ENCODE measurements at regions of chr9 and their contacts with region 1.

Region 1: DNA sequence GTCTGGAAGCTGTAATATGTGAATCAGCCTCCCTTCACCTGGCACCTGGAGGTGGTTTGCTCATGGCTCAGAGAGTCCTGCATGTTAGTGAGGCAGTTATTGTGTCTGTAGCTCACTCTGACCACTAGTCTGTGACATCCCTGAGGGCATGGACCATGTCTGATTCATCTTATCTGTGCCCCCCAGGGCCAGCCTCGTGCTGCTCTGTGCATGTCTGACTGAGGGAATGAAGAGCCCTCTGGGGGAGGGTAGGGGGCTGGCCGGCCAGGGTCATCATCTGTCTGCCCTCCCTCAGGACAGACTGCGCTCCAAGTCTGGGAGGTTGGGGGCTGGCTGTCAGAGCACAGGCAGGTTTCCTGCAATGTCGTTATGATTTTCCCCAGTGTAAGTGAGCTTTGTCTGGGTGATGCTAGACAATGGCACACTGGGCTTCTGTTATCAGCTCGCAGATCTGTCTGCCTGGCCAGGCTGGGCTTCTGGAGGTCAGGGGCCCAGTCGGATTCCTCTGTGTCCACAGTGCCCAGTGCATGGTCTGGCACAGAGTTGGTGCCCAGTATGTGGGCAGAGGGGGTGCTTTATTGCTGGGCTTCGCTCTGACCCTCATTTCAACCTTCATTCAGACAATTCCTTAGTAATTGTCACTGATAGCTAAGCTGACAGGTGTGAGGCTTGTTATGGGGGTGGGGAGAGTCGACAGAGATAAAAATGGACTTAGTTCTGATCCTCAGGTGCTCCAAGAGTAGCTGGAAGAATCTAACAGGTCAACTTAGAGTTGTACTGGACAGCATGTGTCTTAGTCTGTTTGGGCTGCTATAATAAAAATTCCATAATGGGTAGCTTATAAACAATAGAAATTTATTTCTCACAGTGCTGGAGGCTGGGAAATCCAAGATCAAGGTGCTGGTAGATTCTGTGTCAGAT is 85.7 kb upstream of the SHB start:
- DNase-seq: no peak
- ATAC-seq: no peak

Region 2: GRCh38 chr9:36833954-36834353 is 1320.8 kb before region 1 on chr9:
- intact Hi-C with region 1: no loop called
- DNase-seq: peak; percentile 11
- ATAC-seq: no peak

Region 3: GRCh38 chr9:37899041-37899440 is 255.7 kb before region 1 on chr9:
- intact Hi-C with region 1: no loop called
- DNase-seq: no peak
- ATAC-seq: no peak

Region 4: GRCh38 chr9:38107811-38108304 is 46.9 kb before region 1 on chr9:
- intact Hi-C with region 1: loop called in 1 of 2 experiments (anchors 10 kb)
- DNase-seq: no peak
- ATAC-seq: peak in 1 of 2 donors; percentile 51

Measured in left cardiac atrium (tissue), 4 donors.